CD14-positive monocyte (primary cell): ENCODE measurements at regions of chr1 and their contacts with region 1.

Region 1: DNA sequence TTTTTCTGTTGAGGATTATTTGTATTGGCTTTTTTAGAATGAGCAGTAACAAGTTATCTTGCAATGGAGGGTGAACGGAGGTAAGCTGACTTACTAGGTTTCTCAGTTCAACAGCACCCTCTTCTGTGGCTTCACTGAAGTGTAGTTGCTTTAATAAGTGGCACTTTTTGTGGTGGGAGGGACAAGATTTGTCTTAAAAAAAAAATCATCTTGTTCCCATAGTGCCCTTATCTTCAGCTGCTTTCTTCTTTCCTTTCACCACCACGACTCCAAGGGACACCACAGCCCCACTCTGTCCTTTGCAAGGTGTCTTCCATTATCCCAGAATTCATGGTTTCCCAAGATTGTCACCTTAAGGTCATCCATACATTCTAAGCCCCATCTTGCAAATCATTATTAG is 92.9 kb downstream of the PIGK start:
- DNase-seq: peak; percentile 27 to 52 (median 47)
- H3K4me3 ChIP-seq: peak overlapping the region in 2 of 3 experiments; percentile 11 to 38
- H3K4me3 Mint-ChIP-seq: peak overlapping the region; percentile 42 to 85
- H3K27ac ChIP-seq: peak overlapping the region in 1 of 2 donors; percentile 39
- H3K27ac Mint-ChIP-seq: peak overlapping the region in 6 of 7 donors; percentile 20 to 86 (median 68)
- H3K4me1 ChIP-seq: peaks cover 6 to 8% of the 10 kb centered on the region in 2 donors
- H3K4me1 Mint-ChIP-seq: peaks cover 10% of the 10 kb centered on the region
- H3K27me3 ChIP-seq: no peaks in the 10 kb centered on the region
- H3K27me3 Mint-ChIP-seq: no peaks in the 10 kb centered on the region
- CTCF ChIP-seq: peak; percentile 58

Region 2: GRCh38 chr1:76154206-76154956 is 971.9 kb before region 1 on chr1:
- intact Hi-C with region 1: loop called (anchors 5 to 10 kb)
- DNase-seq: peak; percentile 66 to 69 (median 69)
- H3K4me3 ChIP-seq: peak overlapping the region; percentile 52 to 99 (median 85)
- H3K4me3 Mint-ChIP-seq: peak overlapping the region; percentile 98
- H3K27ac ChIP-seq: peak overlapping the region; percentile 35 to 85
- H3K27ac Mint-ChIP-seq: peak overlapping the region; percentile 90 to 98 (median 95)
- H3K4me1 ChIP-seq: peaks cover 5 to 6% of the 10 kb centered on the region in 2 donors
- H3K4me1 Mint-ChIP-seq: peaks cover 11% of the 10 kb centered on the region
- H3K27me3 ChIP-seq: no peaks in the 10 kb centered on the region
- H3K27me3 Mint-ChIP-seq: no peaks in the 10 kb centered on the region
- CTCF ChIP-seq: peak; percentile 99

Region 3: DNA sequence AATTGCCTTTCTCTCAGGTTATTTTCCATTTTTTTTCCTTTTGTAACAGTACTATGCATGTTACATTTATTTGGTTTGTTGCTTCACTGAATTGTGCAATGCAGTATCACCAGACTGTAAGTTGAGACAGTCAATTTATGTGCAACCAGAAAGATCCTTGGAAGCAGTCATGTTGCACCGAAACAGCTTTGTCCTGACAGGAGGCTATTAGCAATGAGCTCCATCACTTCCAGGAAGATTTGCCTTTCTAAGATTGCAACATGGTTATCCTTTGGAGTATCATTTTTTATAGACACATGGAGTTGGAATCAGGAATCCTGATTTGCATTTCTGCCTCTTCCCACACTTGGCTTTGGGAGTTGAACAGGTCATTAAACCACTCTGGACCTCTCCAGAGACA is 343.5 kb before region 1 on chr1:
- intact Hi-C with region 1: no loop called
- DNase-seq: no peak
- H3K4me3 ChIP-seq: no peak overlapping the region
- H3K4me3 Mint-ChIP-seq: no peak overlapping the region
- H3K27ac ChIP-seq: no peak overlapping the region
- H3K27ac Mint-ChIP-seq: no peak overlapping the region
- H3K4me1 ChIP-seq: no peaks in the 10 kb centered on the region
- H3K4me1 Mint-ChIP-seq: no peaks in the 10 kb centered on the region
- H3K27me3 ChIP-seq: no peaks in the 10 kb centered on the region
- H3K27me3 Mint-ChIP-seq: peaks cover 0 to 6% (median 0%) of the 10 kb centered on the region in 3 donors
- CTCF ChIP-seq: no peak

Region 4: DNA sequence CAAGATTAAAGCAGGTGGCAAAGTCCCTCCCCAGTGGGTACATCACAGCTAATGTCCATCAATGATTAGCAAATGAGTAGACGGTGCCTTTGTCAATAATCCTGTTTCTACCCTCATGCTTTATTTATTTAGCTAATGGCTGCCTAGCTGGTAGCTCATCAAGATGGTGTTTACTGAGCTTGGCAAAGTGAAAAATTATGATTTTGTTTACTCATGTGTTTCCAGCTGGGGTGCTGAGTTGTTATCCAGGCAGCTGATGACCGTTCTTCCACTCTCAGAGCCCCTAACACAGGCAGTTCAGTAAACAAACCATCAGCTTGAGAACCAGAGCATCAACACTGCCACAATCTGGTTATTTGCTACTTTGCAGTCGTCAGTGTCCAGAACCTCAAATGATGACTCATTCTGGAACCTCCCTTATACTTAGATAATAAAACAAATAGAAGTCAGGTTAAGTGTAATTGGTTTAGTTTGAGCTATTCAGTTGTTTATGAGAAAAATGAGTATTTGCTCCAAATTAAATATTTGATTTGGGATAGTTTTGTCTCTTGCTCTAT is 95.1 kb before region 1 on chr1:
- intact Hi-C with region 1: no loop called
- DNase-seq: no peak
- H3K4me3 ChIP-seq: no peak overlapping the region
- H3K4me3 Mint-ChIP-seq: no peak overlapping the region
- H3K27ac ChIP-seq: no peak overlapping the region
- H3K27ac Mint-ChIP-seq: no peak overlapping the region
- H3K4me1 ChIP-seq: no peaks in the 10 kb centered on the region
- H3K4me1 Mint-ChIP-seq: no peaks in the 10 kb centered on the region
- H3K27me3 ChIP-seq: no peaks in the 10 kb centered on the region
- H3K27me3 Mint-ChIP-seq: peaks cover 4 to 6% (median 4%) of the 10 kb centered on the region in 3 donors
- CTCF ChIP-seq: no peak